Sciatic nerve (tissue), 2 donors: ENCODE measurements at regions of chr12 and their contacts with region 1.

Region 1: GRCh38 chr12:115916910-115917668 is 360.4 kb downstream of the MED13L start:
- DNase-seq: peak; percentile 78
- ATAC-seq: peak; percentile 57

Region 2: DNA sequence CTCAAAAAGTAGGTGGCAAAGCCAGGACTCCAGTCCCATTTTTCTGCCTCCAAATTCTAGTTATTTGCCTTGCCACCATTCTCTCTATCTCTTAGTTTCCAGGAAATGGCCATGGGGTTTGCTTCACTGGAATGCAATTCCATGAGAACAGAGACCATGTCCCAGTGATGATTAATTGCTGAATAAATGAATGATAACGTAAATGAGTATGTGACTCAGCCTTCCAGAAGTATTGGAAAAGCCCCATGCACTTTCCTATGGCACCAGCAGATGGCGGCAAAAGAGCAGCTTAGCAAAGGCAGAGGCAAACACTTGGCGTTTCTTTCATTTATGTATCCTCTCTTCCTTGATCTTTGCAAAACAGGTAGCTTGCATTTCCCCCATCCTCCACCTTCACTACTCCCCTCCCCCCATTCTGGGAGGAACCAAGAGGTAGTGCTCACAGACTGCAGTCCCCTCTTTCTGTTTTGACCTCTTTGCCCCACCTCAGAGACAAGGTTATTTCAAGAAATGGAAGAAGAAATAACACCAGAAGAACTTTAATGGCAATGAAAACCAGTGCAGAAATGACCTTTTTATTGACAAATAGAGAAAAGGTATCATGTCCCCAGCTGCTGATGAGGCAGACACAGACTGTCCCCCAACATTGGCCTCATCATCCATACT is 1254.4 kb before region 1 on chr12:
- intact Hi-C with region 1: loop called (anchors 10 kb)
- DNase-seq: peak; percentile 89
- ATAC-seq: peak; percentile 74

Region 3: DNA sequence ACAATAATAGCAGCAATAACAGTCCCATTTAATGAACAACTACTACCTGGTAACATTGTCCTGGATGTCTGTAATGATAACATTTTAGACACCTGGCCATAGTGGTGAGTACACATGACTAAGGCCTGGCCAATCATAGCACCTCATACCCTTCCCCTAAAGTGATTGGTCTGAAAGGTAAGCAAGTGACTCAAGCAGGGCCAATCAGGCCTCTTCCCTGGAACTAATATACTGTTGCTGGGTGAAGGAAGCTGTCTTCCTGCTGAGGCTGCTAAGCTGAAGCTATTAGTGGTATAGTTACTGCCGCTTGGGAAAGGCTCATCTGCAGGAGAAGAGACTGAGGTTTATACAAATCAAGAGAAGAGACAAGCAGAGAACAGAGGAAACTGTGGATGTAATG is 1463.0 kb after region 1 on chr12:
- intact Hi-C with region 1: no loop called
- DNase-seq: no peak
- ATAC-seq: no peak